WTC11 (cell line): ENCODE measurements at regions of chr13 and their contacts with region 1.

Region 1: GRCh38 chr13:30114571-30115256 is 192.6 kb downstream of the KATNAL1 start:
- DNase-seq: peak; percentile 96
- ATAC-seq: peak; percentile 82
- H3K4me3 Mint-ChIP-seq: peak overlapping the region; percentile 75
- H3K27ac Mint-ChIP-seq: peak overlapping the region; percentile 76; the same call in 1 of the 2 replicates
- H3K4me1 Mint-ChIP-seq: peaks cover 37% of the 10 kb centered on the region
- H3K27me3 Mint-ChIP-seq: peaks cover 19% of the 10 kb centered on the region
- CTCF ChIP-seq: peak; percentile 67

Region 2: DNA sequence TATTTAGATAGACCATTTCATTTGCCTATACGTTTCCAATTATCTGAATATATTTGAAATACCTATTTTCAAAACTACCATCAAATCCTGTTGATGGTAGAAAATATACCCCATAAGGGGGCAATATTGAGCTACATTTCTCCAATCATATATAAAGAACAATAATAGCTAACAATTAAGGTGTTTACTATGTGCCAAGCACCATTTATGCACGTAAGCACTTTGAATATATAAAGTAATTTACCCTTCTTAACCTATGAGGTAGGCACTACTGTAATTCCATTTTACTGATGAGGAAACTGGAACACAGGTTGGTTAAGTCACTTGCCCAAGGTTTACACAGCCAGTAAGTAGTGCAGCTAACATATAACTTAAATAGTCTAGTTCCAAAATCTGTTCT is 343.5 kb before region 1 on chr13:
- CTCF ChIA-PET with region 1: interaction called, 128 read pairs
- POLR2A ChIA-PET with region 1: no interaction called
- DNase-seq: no peak
- ATAC-seq: no peak
- H3K4me3 Mint-ChIP-seq: no peak overlapping the region
- H3K27ac Mint-ChIP-seq: no peak overlapping the region
- H3K4me1 Mint-ChIP-seq: peaks cover 24% of the 10 kb centered on the region
- H3K27me3 Mint-ChIP-seq: no peaks in the 10 kb centered on the region
- CTCF ChIP-seq: 0 out of 2 replicates have a peak, but pooled peaks have one; percentile 19

Region 3: GRCh38 chr13:29850224-29850898 is 264.4 kb before region 1 on chr13 and contains the start of gene UBL3:
- CTCF ChIA-PET with region 1: interaction called, 17 read pairs
- POLR2A ChIA-PET with region 1: no interaction called
- DNase-seq: peak; percentile 95
- ATAC-seq: peak; percentile 87
- H3K4me3 Mint-ChIP-seq: peak within 1 kb of the TSS; percentile 91
- H3K27ac Mint-ChIP-seq: peak within 1 kb of the TSS; percentile 99
- H3K4me1 Mint-ChIP-seq: peaks cover 29% of the 10 kb centered on the region
- H3K27me3 Mint-ChIP-seq: no peaks in the 10 kb centered on the region; the same call in 1 of the 2 replicates
- CTCF ChIP-seq: no peak
- total RNA-seq, gene UBL3: 12.8 to 15.5 TPM (median 13.5 TPM) in 3 replicates

Region 4: GRCh38 chr13:29964181-29964845 is 150.4 kb before region 1 on chr13:
- CTCF ChIA-PET with region 1: interaction called, 21 read pairs
- POLR2A ChIA-PET with region 1: no interaction called
- DNase-seq: peak; percentile 44
- ATAC-seq: peak; percentile 92
- H3K4me3 Mint-ChIP-seq: peak overlapping the region; percentile 4; the same call in 1 of the 2 replicates
- H3K27ac Mint-ChIP-seq: peak overlapping the region; percentile 61
- H3K4me1 Mint-ChIP-seq: peaks cover 52% of the 10 kb centered on the region
- H3K27me3 Mint-ChIP-seq: peaks cover 8% of the 10 kb centered on the region
- CTCF ChIP-seq: no peak

Region 5: GRCh38 chr13:30017880-30018279 is 96.8 kb before region 1 on chr13:
- CTCF ChIA-PET with region 1: interaction called, 33 read pairs
- POLR2A ChIA-PET with region 1: no interaction called
- DNase-seq: peak; percentile 51
- ATAC-seq: peak; percentile 87
- H3K4me3 Mint-ChIP-seq: no peak overlapping the region
- H3K27ac Mint-ChIP-seq: 0 out of 2 replicates have a peak overlapping the region, but pooled peaks have one; percentile 57
- H3K4me1 Mint-ChIP-seq: peaks cover 56% of the 10 kb centered on the region
- H3K27me3 Mint-ChIP-seq: no peaks in the 10 kb centered on the region; the same call in 1 of the 2 replicates
- CTCF ChIP-seq: no peak

Region 6: DNA sequence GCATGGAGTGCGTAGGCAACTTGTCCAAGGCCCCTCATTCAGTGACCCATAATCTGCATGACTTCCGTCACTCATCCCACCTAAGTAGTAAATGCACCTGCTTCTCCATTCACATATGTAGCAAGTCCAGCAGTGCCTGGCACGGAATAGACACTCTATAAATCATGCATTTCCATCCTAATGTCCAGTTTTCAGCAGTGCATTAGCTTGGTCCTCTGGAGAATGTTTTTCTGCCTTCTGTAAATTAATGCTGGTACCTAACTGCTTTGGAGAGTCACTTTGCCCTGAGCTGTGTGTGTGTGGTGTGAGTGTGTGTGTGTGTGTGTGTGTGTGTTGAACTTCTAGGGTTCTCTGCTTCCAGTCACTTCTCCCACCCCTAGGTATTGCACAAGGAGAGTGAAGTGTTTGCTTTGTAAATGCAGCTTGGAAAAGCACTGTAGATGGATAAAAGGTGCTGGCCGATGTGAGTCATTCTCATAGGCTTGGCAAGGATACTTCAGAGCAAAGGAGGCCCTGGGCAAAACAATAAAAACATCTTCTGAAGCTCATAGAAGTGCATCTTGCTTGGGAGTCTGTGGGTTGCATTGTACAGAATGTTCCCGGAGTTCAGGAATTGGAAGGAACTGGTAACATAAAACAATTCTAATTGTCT is 10.8 kb after region 1 on chr13:
- CTCF ChIA-PET with region 1: interaction called, 69 read pairs
- POLR2A ChIA-PET with region 1: no interaction called
- DNase-seq: no peak
- ATAC-seq: no peak
- H3K4me3 Mint-ChIP-seq: no peak overlapping the region
- H3K27ac Mint-ChIP-seq: no peak overlapping the region
- H3K4me1 Mint-ChIP-seq: no peaks in the 10 kb centered on the region
- H3K27me3 Mint-ChIP-seq: no peaks in the 10 kb centered on the region
- CTCF ChIP-seq: no peak